Vagina (tissue), 2 donors: ENCODE measurements at regions of chr14 and their contacts with region 1.

Region 1: GRCh38 chr14:93906341-93907329 is 20.5 kb upstream of the FAM181A start:
- DNase-seq: no peak
- H3K4me3 ChIP-seq: no peak overlapping the region
- H3K27ac ChIP-seq: no peak overlapping the region
- H3K4me1 ChIP-seq: no peaks in the 10 kb centered on the region
- H3K27me3 ChIP-seq: no peaks in the 10 kb centered on the region
- CTCF ChIP-seq: peak in 2 of 3 experiments; percentile 43 to 57
- POLR2A ChIP-seq: no peak

Region 2: DNA sequence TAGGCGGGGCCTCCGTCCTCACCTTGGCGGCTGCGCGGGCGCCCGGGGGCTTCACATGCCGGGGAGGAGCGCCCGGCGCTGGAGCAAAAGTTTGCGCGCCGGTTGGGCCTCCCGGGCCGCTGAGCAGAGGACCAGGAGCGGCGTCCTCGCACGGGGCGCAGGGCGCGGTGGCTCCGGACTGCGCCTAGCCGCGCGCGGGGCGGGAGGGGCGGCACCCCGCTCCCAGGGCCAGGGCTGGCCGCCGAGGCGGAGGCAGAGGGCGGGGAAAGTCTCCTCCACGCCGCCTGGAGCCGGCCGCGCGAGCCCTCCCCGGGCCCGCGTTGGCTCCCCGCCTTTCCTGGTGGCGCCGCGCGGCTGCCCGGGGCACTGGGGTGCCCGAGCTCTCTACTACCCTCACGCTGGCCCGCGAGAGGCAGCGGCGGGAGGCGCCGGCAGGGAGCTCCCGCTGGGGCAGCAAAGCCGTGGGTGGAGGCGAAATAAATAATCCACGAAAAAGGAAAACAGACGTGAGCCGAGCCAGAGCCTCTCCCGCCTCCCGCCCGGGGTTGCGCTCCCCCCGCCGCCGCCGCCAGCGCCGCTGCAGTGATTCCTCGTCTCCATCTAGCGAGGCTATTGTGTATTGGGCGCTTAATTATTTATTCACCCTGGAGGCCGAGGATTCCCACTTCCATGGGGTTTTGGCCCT is 118.0 kb before region 1 on chr14:
- intact Hi-C with region 1: loop called (anchors 10 kb)
- DNase-seq: no peak
- H3K4me3 ChIP-seq: peak overlapping the region; percentile 58 to 69
- H3K27ac ChIP-seq: peak overlapping the region; percentile 84
- H3K4me1 ChIP-seq: peaks cover 37% of the 10 kb centered on the region
- H3K27me3 ChIP-seq: no peaks in the 10 kb centered on the region
- CTCF ChIP-seq: peak in 1 of 3 experiments; percentile 36
- POLR2A ChIP-seq: peak in 1 of 2 donors; percentile 33

Region 3: GRCh38 chr14:94936401-94936892 is 1029.8 kb after region 1 on chr14:
- intact Hi-C with region 1: no loop called
- DNase-seq: no peak
- H3K4me3 ChIP-seq: peak overlapping the region; percentile 17 to 33
- H3K27ac ChIP-seq: peak overlapping the region; percentile 76
- H3K4me1 ChIP-seq: peaks cover 35% of the 10 kb centered on the region
- H3K27me3 ChIP-seq: no peaks in the 10 kb centered on the region
- CTCF ChIP-seq: no peak
- POLR2A ChIP-seq: no peak